ENCODE measurements at regions of chr4 and their contacts with region 1.

Region 1: GRCh38 chr4:184649026-184649970 is at the starts of genes CASP3 and PRIMPOL:
- DNase-seq: peak; percentile 92 to 95 (median 94)
- H3K4me3 ChIP-seq: peak within 1 kb of the TSS; percentile 81 to 85
- H3K4me3 Mint-ChIP-seq: peak within 1 kb of the TSS; percentile 92 to 98 (median 96)
- H3K27ac ChIP-seq: peak within 1 kb of the TSS; percentile 88
- H3K27ac Mint-ChIP-seq: peak within 1 kb of the TSS; percentile 90 to 97 (median 95)
- H3K4me1 ChIP-seq: peaks cover 51% of the 10 kb centered on the region
- H3K4me1 Mint-ChIP-seq: peaks cover 46 to 54% (median 50%) of the 10 kb centered on the region in 4 donors
- H3K27me3 ChIP-seq: no peaks in the 10 kb centered on the region
- H3K27me3 Mint-ChIP-seq: no peaks in the 10 kb centered on the region
- total RNA-seq, gene CASP3: 17.9 to 24.9 TPM
- total RNA-seq, gene PRIMPOL: 20.2 to 23.2 TPM

Region 2: DNA sequence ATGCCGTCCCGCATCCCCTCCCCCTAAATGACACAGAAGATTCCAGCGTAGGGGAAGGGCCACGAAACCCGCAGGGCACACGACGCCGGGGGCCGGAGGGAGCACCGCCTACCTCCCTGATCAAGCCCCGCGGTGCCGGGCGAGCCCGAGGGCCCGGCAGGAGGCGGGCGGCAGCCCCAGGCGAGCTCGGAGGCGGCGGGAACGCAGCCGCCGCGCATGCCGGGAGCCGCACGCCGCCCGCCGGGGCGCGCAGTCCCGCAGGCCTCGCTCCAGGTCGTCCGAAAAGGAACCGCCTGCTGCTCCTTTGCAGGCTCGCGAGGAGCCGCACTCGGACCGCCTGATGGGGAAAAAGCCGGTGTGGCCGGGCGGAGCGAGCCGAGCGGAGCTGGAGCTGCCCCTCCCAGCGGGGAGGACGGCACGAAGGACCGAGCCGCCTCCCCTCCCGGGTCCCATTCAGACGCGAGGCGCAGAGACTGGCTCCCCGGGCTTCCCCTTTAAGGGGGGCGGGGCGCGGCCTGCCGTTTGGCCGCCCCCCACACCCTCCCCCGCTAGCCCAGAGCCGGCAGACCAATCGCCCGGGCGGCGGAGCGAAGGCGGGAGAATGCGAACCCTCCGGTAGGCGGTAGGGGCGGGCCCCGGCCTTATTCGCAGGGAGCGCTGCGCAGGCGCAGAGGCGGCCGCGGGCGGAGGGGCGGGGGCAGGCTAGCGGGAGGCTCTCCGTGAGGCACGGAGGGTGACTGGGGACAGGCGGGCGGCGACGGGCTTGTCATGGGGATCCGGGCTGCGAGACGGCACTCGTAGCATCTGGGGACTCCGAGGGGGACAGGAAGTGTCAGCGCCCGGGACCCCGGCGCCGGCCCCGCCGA is 1145.0 kb before region 1 on chr4:
- CTCF ChIA-PET with region 1: no interaction called
- POLR2A ChIA-PET with region 1: interaction called, 7 read pairs
- intact Hi-C with region 1: loop called (anchors 5 kb)
- DNase-seq: peak; percentile 98 to 100 (median 99)
- H3K4me3 ChIP-seq: peak overlapping the region; percentile 50 to 73
- H3K4me3 Mint-ChIP-seq: peak overlapping the region; percentile 82 to 98 (median 94)
- H3K27ac ChIP-seq: peak overlapping the region; percentile 90
- H3K27ac Mint-ChIP-seq: peak overlapping the region; percentile 89 to 98 (median 95)
- H3K4me1 ChIP-seq: peaks cover 19% of the 10 kb centered on the region
- H3K4me1 Mint-ChIP-seq: peaks cover 9 to 27% (median 23%) of the 10 kb centered on the region in 4 donors
- H3K27me3 ChIP-seq: no peaks in the 10 kb centered on the region
- H3K27me3 Mint-ChIP-seq: no peaks in the 10 kb centered on the region

Region 3: GRCh38 chr4:184474263-184475095 is 174.8 kb before region 1 on chr4 and contains the start of gene IRF2:
- CTCF ChIA-PET with region 1: no interaction called
- POLR2A ChIA-PET with region 1: interaction called, 45 read pairs
- intact Hi-C with region 1: loop called (anchors 1 kb)
- DNase-seq: peak; percentile 92 to 99 (median 97)
- H3K4me3 ChIP-seq: peak within 1 kb of the TSS; percentile 96 to 100
- H3K4me3 Mint-ChIP-seq: peak within 1 kb of the TSS; percentile 95 to 100 (median 100)
- H3K27ac ChIP-seq: peak within 1 kb of the TSS; percentile 99
- H3K27ac Mint-ChIP-seq: peak within 1 kb of the TSS; percentile 96 to 100 (median 99)
- H3K4me1 ChIP-seq: peaks cover 66% of the 10 kb centered on the region
- H3K4me1 Mint-ChIP-seq: peaks cover 42 to 85% (median 57%) of the 10 kb centered on the region in 4 donors
- H3K27me3 ChIP-seq: no peaks in the 10 kb centered on the region
- H3K27me3 Mint-ChIP-seq: no peaks in the 10 kb centered on the region
- total RNA-seq, gene IRF2: 66.7 to 70.4 TPM

Region 4: DNA sequence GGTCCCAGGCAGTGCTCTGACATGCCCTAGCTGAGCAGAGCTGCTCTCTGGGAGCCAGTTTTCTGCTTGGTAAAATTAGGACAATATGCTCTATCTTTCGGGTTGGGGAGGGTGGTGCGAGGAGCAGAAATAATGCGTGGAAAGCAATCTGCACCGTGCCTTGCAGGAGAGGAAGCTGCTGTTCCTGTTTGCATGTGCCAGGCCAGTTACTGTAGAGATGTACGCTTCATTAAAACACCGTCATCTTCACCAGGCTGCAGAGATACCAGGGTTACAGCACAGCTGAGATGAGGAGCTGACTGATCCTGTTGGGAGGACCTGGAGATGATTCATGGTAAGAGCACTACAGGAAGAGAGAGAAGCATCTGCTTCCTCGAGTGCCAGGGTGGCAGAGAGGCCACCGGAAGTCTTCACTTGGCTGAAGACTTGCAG is 145.4 kb before region 1 on chr4:
- CTCF ChIA-PET with region 1: no interaction called
- POLR2A ChIA-PET with region 1: no interaction called
- intact Hi-C with region 1: no loop called
- DNase-seq: peak in 4 of 5 donors; percentile 17 to 32 (median 25)
- H3K4me3 ChIP-seq: no peak overlapping the region
- H3K4me3 Mint-ChIP-seq: peak overlapping the region in 7 of 8 donors; percentile 48 to 81 (median 69)
- H3K27ac ChIP-seq: peak overlapping the region; percentile 28
- H3K27ac Mint-ChIP-seq: peak overlapping the region; percentile 8 to 88 (median 65)
- H3K4me1 ChIP-seq: peaks cover 20% of the 10 kb centered on the region
- H3K4me1 Mint-ChIP-seq: peaks cover 13 to 34% (median 19%) of the 10 kb centered on the region in 4 donors
- H3K27me3 ChIP-seq: no peaks in the 10 kb centered on the region
- H3K27me3 Mint-ChIP-seq: no peaks in the 10 kb centered on the region

Region 5: GRCh38 chr4:184616633-184617551 is 32.4 kb before region 1 on chr4:
- CTCF ChIA-PET with region 1: no interaction called
- POLR2A ChIA-PET with region 1: no interaction called
- intact Hi-C with region 1: no loop called
- DNase-seq: no peak
- H3K4me3 ChIP-seq: no peak overlapping the region
- H3K4me3 Mint-ChIP-seq: no peak overlapping the region
- H3K27ac ChIP-seq: no peak overlapping the region
- H3K27ac Mint-ChIP-seq: no peak overlapping the region
- H3K4me1 ChIP-seq: no peaks in the 10 kb centered on the region
- H3K4me1 Mint-ChIP-seq: no peaks in the 10 kb centered on the region
- H3K27me3 ChIP-seq: no peaks in the 10 kb centered on the region
- H3K27me3 Mint-ChIP-seq: no peaks in the 10 kb centered on the region

Region 6: GRCh38 chr4:184662236-184662635 is 12.9 kb after region 1 on chr4:
- CTCF ChIA-PET with region 1: interaction called, 3 read pairs
- POLR2A ChIA-PET with region 1: interaction called, 13 read pairs
- intact Hi-C with region 1: no loop called
- DNase-seq: no peak
- H3K4me3 ChIP-seq: no peak overlapping the region
- H3K4me3 Mint-ChIP-seq: no peak overlapping the region
- H3K27ac ChIP-seq: no peak overlapping the region
- H3K27ac Mint-ChIP-seq: no peak overlapping the region
- H3K4me1 ChIP-seq: no peaks in the 10 kb centered on the region
- H3K4me1 Mint-ChIP-seq: peaks cover 0 to 5% (median 3%) of the 10 kb centered on the region in 4 donors
- H3K27me3 ChIP-seq: no peaks in the 10 kb centered on the region
- H3K27me3 Mint-ChIP-seq: no peaks in the 10 kb centered on the region

Region 7: GRCh38 chr4:184745831-184746795 is 96.8 kb after region 1 on chr4:
- CTCF ChIA-PET with region 1: interaction called, 9 read pairs
- POLR2A ChIA-PET with region 1: no interaction called
- intact Hi-C with region 1: loop called (anchors 5 kb)
- DNase-seq: peak; percentile 61 to 64 (median 63)
- H3K4me3 ChIP-seq: no peak overlapping the region
- H3K4me3 Mint-ChIP-seq: no peak overlapping the region
- H3K27ac ChIP-seq: no peak overlapping the region
- H3K27ac Mint-ChIP-seq: peak overlapping the region in 2 of 7 donors; percentile 17 to 71
- H3K4me1 ChIP-seq: peaks cover 4% of the 10 kb centered on the region
- H3K4me1 Mint-ChIP-seq: peaks cover 0 to 10% (median 2%) of the 10 kb centered on the region in 4 donors
- H3K27me3 ChIP-seq: no peaks in the 10 kb centered on the region
- H3K27me3 Mint-ChIP-seq: peaks cover 0 to 3% of the 10 kb centered on the region in 2 donors

Region 8: GRCh38 chr4:184983672-184984356 is 334.5 kb after region 1 on chr4:
- CTCF ChIA-PET with region 1: no interaction called
- POLR2A ChIA-PET with region 1: no interaction called
- intact Hi-C with region 1: loop called (anchors 2 kb)
- DNase-seq: peak in 4 of 5 donors; percentile 28 to 36 (median 30)
- H3K4me3 ChIP-seq: peak overlapping the region in 1 of 2 donors; percentile 29
- H3K4me3 Mint-ChIP-seq: no peak overlapping the region
- H3K27ac ChIP-seq: no peak overlapping the region
- H3K27ac Mint-ChIP-seq: no peak overlapping the region
- H3K4me1 ChIP-seq: peaks cover 20% of the 10 kb centered on the region
- H3K4me1 Mint-ChIP-seq: peaks cover 0 to 9% (median 0%) of the 10 kb centered on the region in 4 donors
- H3K27me3 ChIP-seq: no peaks in the 10 kb centered on the region
- H3K27me3 Mint-ChIP-seq: peaks cover 0 to 8% of the 10 kb centered on the region in 2 donors

Region 9: GRCh38 chr4:185122681-185123345 is 473.5 kb after region 1 on chr4:
- CTCF ChIA-PET with region 1: no interaction called
- POLR2A ChIA-PET with region 1: no interaction called
- intact Hi-C with region 1: no loop called
- DNase-seq: no peak
- H3K4me3 ChIP-seq: no peak overlapping the region
- H3K4me3 Mint-ChIP-seq: no peak overlapping the region
- H3K27ac ChIP-seq: no peak overlapping the region
- H3K27ac Mint-ChIP-seq: no peak overlapping the region
- H3K4me1 ChIP-seq: peaks cover 10% of the 10 kb centered on the region
- H3K4me1 Mint-ChIP-seq: peaks cover 6 to 7% (median 6%) of the 10 kb centered on the region in 4 donors
- H3K27me3 ChIP-seq: no peaks in the 10 kb centered on the region
- H3K27me3 Mint-ChIP-seq: peaks cover 15 to 18% of the 10 kb centered on the region in 2 donors

Region 10: GRCh38 chr4:185203486-185204237 is 554.4 kb after region 1 on chr4 and contains the start of gene CFAP97:
- CTCF ChIA-PET with region 1: no interaction called
- POLR2A ChIA-PET with region 1: no interaction called
- intact Hi-C with region 1: loop called (anchors 1 kb)
- DNase-seq: peak; percentile 88 to 90 (median 90)
- H3K4me3 ChIP-seq: peak within 1 kb of the TSS; percentile 47 to 83
- H3K4me3 Mint-ChIP-seq: peak within 1 kb of the TSS; percentile 91 to 99 (median 96)
- H3K27ac ChIP-seq: peak within 1 kb of the TSS; percentile 82
- H3K27ac Mint-ChIP-seq: peak within 1 kb of the TSS; percentile 98 to 99 (median 99)
- H3K4me1 ChIP-seq: peaks cover 48% of the 10 kb centered on the region
- H3K4me1 Mint-ChIP-seq: peaks cover 31 to 66% (median 48%) of the 10 kb centered on the region in 4 donors
- H3K27me3 ChIP-seq: no peaks in the 10 kb centered on the region
- H3K27me3 Mint-ChIP-seq: no peaks in the 10 kb centered on the region
- total RNA-seq, gene CFAP97: 41.6 to 41.9 TPM

Measured in CD4-positive, alpha-beta memory T cell (primary cell).